Activated CD4-positive, alpha-beta memory T cell treated with anti-CD3 and anti-CD28 coated beads, Interleukin-2, amount 10 ng/mL, durations not matched to agents 7 days and 5 days (primary cell): ENCODE measurements at regions of chr20 and their contacts with region 1.

Region 1: GRCh38 chr20:8756410-8756809 is 312.5 kb upstream of the PLCB4 start:
- DNase-seq: no peak
- H3K4me3 Mint-ChIP-seq: no peak overlapping the region
- H3K27ac Mint-ChIP-seq: no peak overlapping the region
- H3K4me1 Mint-ChIP-seq: no peaks in the 10 kb centered on the region
- H3K27me3 Mint-ChIP-seq: no peaks in the 10 kb centered on the region

Region 2: GRCh38 chr20:8774412-8774811 is 18.0 kb after region 1 on chr20:
- CTCF ChIA-PET with region 1: interaction called, 10 read pairs
- POLR2A ChIA-PET with region 1: no interaction called
- DNase-seq: no peak
- H3K4me3 Mint-ChIP-seq: no peak overlapping the region
- H3K27ac Mint-ChIP-seq: no peak overlapping the region
- H3K4me1 Mint-ChIP-seq: no peaks in the 10 kb centered on the region
- H3K27me3 Mint-ChIP-seq: no peaks in the 10 kb centered on the region